Heart right ventricle (tissue), 16 donors: ENCODE measurements at regions of chr16 and their contacts with region 1.

Region 1: GRCh38 chr16:56600398-56600999 is 7.9 kb upstream of the MT2A start:
- DNase-seq: no peak
- ATAC-seq: peak in 2 of 8 donors; percentile 34 to 39
- H3K4me3 ChIP-seq: no peak overlapping the region
- H3K27ac ChIP-seq: no peak overlapping the region
- H3K4me1 ChIP-seq: peaks cover 0 to 5% (median 0%) of the 10 kb centered on the region in 9 donors
- H3K27me3 ChIP-seq: peaks cover 0 to 6% (median 0%) of the 10 kb centered on the region in 7 donors
- CTCF ChIP-seq: peak; percentile 26 to 67 (median 58)

Region 2: GRCh38 chr16:56513972-56514371 is 86.5 kb before region 1 on chr16:
- intact Hi-C with region 1: loop called in 9 of 10 experiments (anchors 2 to 10 kb)
- DNase-seq: peak in 1 of 2 donors; percentile 36
- ATAC-seq: peak in 5 of 8 donors; percentile 55 to 80 (median 71)
- H3K4me3 ChIP-seq: no peak overlapping the region
- H3K27ac ChIP-seq: no peak overlapping the region
- H3K4me1 ChIP-seq: peaks cover 0 to 55% (median 34%) of the 10 kb centered on the region in 9 donors
- H3K27me3 ChIP-seq: no peaks in the 10 kb centered on the region
- CTCF ChIP-seq: peak; percentile 43 to 80 (median 68)

Region 3: GRCh38 chr16:56519459-56520250 is 80.8 kb before region 1 on chr16 and contains the start of gene BBS2:
- intact Hi-C with region 1: loop called in 8 of 10 experiments (anchors 2 to 10 kb)
- DNase-seq: peak; percentile 90 to 94
- ATAC-seq: peak; percentile 96 to 99 (median 98)
- H3K4me3 ChIP-seq: peak within 1 kb of the TSS; percentile 71 to 99 (median 92)
- H3K27ac ChIP-seq: peak within 1 kb of the TSS; percentile 35 to 94 (median 90)
- H3K4me1 ChIP-seq: peaks cover 0 to 56% (median 38%) of the 10 kb centered on the region in 9 donors
- H3K27me3 ChIP-seq: no peaks in the 10 kb centered on the region
- CTCF ChIP-seq: peak in 1 of 9 donors; percentile 14
- total RNA-seq, gene BBS2: 37.7 to 75.9 (median 60.1) TPM

Region 4: GRCh38 chr16:56643080-56643778 is 42.7 kb after region 1 on chr16:
- intact Hi-C with region 1: loop called in 5 of 10 experiments (anchors 5 kb)
- DNase-seq: peak; percentile 42 to 77
- ATAC-seq: peak; percentile 85 to 94 (median 92)
- H3K4me3 ChIP-seq: peak overlapping the region in 9 of 10 donors; percentile 11 to 49 (median 41)
- H3K27ac ChIP-seq: peak overlapping the region in 5 of 10 donors; percentile 0 to 42 (median 23)
- H3K4me1 ChIP-seq: peaks cover 0 to 31% (median 20%) of the 10 kb centered on the region in 9 donors
- H3K27me3 ChIP-seq: peaks cover 0 to 95% (median 46%) of the 10 kb centered on the region in 7 donors
- CTCF ChIP-seq: peak in 8 of 9 donors; percentile 6 to 60 (median 46)

Region 5: DNA sequence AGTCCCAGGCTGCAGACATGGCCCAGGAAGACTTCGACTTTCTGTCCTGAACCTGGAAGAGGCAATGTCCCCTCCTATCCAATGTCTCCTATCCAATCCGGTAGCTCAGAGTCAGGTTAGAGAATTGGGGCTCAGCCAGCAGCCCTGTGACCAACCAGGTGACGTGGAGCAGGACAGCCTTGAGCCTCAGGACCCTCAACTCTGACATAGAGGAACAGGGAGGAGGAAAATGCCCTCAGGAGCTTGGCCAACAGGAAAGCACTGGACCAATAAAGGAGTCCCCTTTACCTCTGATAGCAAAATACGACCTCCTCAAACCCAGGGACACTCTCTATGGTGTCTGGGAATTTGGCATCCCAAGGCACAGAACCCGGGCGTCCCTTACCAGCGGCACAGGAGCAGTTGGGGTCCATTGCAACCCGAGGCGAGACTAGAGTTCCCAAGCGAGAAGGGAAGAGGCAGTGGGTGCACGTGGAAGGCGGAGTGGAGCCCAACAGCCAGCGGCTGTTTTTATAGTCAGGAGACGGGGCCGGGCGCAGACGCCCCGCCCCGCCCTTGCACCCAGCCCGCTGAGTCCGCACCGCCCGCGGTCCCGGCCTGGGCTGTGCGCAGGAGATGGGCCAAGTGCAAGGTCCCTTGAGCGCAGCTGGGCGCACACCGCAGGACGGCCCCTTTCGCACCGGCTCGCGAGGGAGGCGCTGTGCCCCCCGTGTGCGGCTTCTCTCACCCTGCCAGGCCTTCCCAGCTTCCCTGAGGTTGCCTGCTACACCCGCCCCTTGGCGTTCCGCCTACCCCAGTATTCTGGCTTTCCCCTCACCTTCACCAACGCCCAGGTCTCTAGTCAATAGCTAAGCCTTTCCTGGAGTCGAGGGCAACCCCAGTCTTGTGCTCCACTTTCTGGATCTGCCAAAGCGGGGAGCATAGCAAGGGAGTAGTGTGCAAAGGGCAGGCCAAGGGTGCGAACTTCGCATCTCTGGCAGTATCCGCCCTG is 67.4 kb after region 1 on chr16 and contains the start of gene MT1G:
- intact Hi-C with region 1: no loop called
- DNase-seq: peak; percentile 37 to 64
- ATAC-seq: peak; percentile 64 to 92 (median 86)
- H3K4me3 ChIP-seq: peak within 1 kb of the TSS in 8 of 10 donors; percentile 4 to 27 (median 18)
- H3K27ac ChIP-seq: no peak within 1 kb of the TSS
- H3K4me1 ChIP-seq: peaks cover 0 to 27% (median 20%) of the 10 kb centered on the region in 9 donors
- H3K27me3 ChIP-seq: peaks cover 13 to 100% (median 88%) of the 10 kb centered on the region in 7 donors
- CTCF ChIP-seq: no peak
- total RNA-seq, gene MT1G: 0.95 to 9.0 (median 1.0) TPM in 4 of 10 donors, not detected in the others

Region 6: GRCh38 chr16:56681939-56682702 is 81.6 kb after region 1 on chr16 and contains the start of gene MT1X:
- intact Hi-C with region 1: loop called in 5 of 10 experiments (anchors 5 kb)
- DNase-seq: peak; percentile 88 to 95
- ATAC-seq: peak; percentile 93 to 99 (median 98)
- H3K4me3 ChIP-seq: peak within 1 kb of the TSS; percentile 37 to 71 (median 58)
- H3K27ac ChIP-seq: peak within 1 kb of the TSS; percentile 60 to 90 (median 82)
- H3K4me1 ChIP-seq: peaks cover 0 to 55% (median 28%) of the 10 kb centered on the region in 9 donors
- H3K27me3 ChIP-seq: peaks cover 0 to under 1% (median 0%) of the 10 kb centered on the region in 7 donors
- CTCF ChIP-seq: no peak
- total RNA-seq, gene MT1X: 15.8 to 616 (median 71.4) TPM

Region 7: GRCh38 chr16:56700195-56700594 is 99.7 kb after region 1 on chr16:
- intact Hi-C with region 1: loop called (anchors 1 to 5 kb)
- DNase-seq: no peak
- ATAC-seq: no peak
- H3K4me3 ChIP-seq: no peak overlapping the region
- H3K27ac ChIP-seq: no peak overlapping the region
- H3K4me1 ChIP-seq: peaks cover 0 to 9% (median 0%) of the 10 kb centered on the region in 9 donors
- H3K27me3 ChIP-seq: no peaks in the 10 kb centered on the region
- CTCF ChIP-seq: no peak

Region 8: DNA sequence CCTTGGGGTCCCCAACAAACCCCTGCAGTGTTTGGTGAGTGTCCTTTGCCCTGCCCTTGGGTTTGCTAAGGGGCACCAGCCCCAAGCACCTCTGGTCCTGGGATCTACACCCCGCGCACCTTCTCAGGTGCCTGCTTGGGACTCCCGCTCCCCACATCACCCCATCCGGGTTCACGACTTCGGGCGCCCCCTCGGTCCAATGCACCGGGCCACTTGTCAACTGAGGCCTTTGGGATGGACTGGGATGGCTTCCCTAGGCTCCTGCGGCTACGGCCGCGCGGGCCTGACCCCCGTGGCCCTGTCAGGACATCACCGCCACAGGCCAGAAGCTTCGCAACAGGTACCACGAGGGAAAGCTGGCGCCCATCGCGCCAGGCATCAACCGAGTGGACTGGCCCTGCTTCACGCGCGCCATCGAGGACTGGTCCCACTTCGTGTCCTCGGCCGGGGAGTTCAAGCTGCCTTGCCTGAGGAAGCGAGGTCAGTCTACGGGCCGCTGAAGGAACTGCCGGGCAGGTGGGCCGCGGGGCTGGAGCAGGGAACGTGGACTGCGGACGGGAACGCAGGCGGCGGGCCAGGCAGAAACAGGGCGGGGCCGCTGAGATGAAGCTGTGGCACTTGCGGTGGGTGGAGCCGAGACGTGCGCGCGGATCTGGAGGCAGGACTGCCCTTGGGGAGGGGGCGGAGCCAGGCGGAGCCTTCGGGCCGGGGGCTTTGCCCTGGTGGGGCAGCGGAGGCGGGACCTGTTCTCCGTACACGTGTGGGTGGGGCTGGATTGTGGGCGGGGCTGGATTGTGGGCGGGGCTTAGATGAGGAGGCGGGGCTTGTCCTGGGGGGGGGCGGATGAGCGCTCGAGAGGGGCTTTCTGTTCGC is 1384.1 kb after region 1 on chr16:
- intact Hi-C with region 1: no loop called
- DNase-seq: peak; percentile 67 to 87
- ATAC-seq: peak; percentile 84 to 92 (median 90)
- H3K4me3 ChIP-seq: peak overlapping the region; percentile 19 to 65 (median 55)
- H3K27ac ChIP-seq: no peak overlapping the region
- H3K4me1 ChIP-seq: peaks cover 6 to 24% (median 15%) of the 10 kb centered on the region in 9 donors
- H3K27me3 ChIP-seq: peaks cover 0 to 13% (median 0%) of the 10 kb centered on the region in 7 donors
- CTCF ChIP-seq: no peak